ENCODE measurements at regions of chr2 and their contacts with region 1.

Region 1: GRCh38 chr2:197310271-197310985 is at the start of gene ANKRD44:
- DNase-seq: peak; percentile 87
- H3K4me3 Mint-ChIP-seq: peak within 1 kb of the TSS; percentile 89
- H3K27ac Mint-ChIP-seq: peak within 1 kb of the TSS; percentile 93
- H3K4me1 Mint-ChIP-seq: peaks cover 63% of the 10 kb centered on the region
- H3K27me3 Mint-ChIP-seq: no peaks in the 10 kb centered on the region
- total RNA-seq, gene ANKRD44: 107 and 120 TPM in 2 replicates

Region 2: DNA sequence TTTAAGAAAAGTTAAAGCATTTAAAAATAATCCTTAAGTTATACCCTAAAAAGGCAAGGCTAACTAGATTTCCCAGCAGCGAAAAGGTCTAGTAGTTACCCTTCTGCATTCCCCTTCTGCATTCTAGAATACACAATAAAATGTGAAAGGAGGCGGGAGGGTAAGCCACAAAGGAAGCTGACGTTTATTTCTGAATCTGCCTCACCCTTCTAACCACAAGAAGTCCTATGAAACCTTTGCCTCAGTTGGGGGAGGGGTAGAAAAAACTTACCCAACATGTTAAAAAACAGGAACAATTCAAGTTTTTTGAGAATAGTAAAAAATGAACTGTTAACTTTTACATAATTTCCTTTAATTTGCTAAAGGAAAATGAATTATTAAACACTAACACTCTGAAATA is 1150.3 kb before region 1 on chr2:
- intact Hi-C with region 1: loop called (anchors 10 kb)
- DNase-seq: peak; percentile 69
- H3K4me3 Mint-ChIP-seq: peak overlapping the region; percentile 55
- H3K27ac Mint-ChIP-seq: peak overlapping the region; percentile 87
- H3K4me1 Mint-ChIP-seq: peaks cover 60% of the 10 kb centered on the region
- H3K27me3 Mint-ChIP-seq: no peaks in the 10 kb centered on the region

Region 3: DNA sequence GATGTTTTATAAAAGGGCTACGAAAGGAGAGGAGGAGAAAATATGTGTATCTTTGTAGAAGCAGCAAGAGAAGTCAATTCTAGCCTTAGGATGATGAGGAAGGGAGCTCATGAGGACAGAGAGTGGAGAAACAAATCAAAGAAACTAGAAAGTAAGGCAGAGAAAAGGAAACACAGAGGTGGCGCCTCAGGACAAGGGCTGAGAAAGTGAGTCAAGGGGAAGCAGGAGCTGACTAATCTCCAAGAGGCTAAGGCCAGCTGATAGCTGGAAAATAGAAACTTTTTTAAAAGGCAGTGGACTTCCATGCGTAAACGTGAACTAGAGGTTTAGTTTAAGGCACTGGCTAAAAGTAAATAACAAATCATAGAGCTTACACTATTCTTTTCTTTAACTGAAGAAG is 173.2 kb before region 1 on chr2:
- intact Hi-C with region 1: loop called (anchors 5 kb)
- DNase-seq: no peak
- H3K4me3 Mint-ChIP-seq: peak overlapping the region; percentile 13
- H3K27ac Mint-ChIP-seq: peak overlapping the region; percentile 68
- H3K4me1 Mint-ChIP-seq: peaks cover 82% of the 10 kb centered on the region
- H3K27me3 Mint-ChIP-seq: no peaks in the 10 kb centered on the region

Region 4: GRCh38 chr2:197152451-197153228 is 157.8 kb before region 1 on chr2:
- intact Hi-C with region 1: no loop called
- DNase-seq: no peak
- H3K4me3 Mint-ChIP-seq: peak overlapping the region; percentile 6
- H3K27ac Mint-ChIP-seq: peak overlapping the region; percentile 59
- H3K4me1 Mint-ChIP-seq: peaks cover 58% of the 10 kb centered on the region
- H3K27me3 Mint-ChIP-seq: no peaks in the 10 kb centered on the region

Region 5: GRCh38 chr2:197198890-197199289 is 111.5 kb before region 1 on chr2:
- intact Hi-C with region 1: loop called (anchors 1 kb)
- DNase-seq: peak; percentile 89
- H3K4me3 Mint-ChIP-seq: peak overlapping the region; percentile 86
- H3K27ac Mint-ChIP-seq: peak overlapping the region; percentile 95
- H3K4me1 Mint-ChIP-seq: peaks cover 80% of the 10 kb centered on the region
- H3K27me3 Mint-ChIP-seq: no peaks in the 10 kb centered on the region

Region 6: DNA sequence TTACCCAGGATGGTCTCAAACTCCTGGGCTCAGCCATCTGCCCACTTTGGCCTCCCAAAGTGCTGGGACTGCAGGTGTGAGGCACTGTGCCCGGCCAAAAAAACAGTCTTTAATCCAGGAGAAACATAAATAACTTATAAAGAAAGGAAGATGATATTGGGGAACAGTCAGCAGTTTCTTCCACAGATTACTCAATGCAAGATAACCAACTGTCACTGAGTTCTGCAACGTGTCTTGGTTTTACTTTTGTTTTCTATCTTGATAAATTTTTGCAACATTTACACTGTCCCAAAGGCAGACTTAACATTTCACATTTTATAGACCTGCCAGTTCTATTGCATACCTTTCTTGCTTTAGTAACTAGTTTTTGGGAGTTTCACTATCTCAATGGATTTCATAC is 71.0 kb before region 1 on chr2:
- intact Hi-C with region 1: loop called (anchors 1 kb)
- DNase-seq: no peak
- H3K4me3 Mint-ChIP-seq: peak overlapping the region; percentile 77
- H3K27ac Mint-ChIP-seq: peak overlapping the region; percentile 94
- H3K4me1 Mint-ChIP-seq: peaks cover 73% of the 10 kb centered on the region
- H3K27me3 Mint-ChIP-seq: no peaks in the 10 kb centered on the region

Region 7: DNA sequence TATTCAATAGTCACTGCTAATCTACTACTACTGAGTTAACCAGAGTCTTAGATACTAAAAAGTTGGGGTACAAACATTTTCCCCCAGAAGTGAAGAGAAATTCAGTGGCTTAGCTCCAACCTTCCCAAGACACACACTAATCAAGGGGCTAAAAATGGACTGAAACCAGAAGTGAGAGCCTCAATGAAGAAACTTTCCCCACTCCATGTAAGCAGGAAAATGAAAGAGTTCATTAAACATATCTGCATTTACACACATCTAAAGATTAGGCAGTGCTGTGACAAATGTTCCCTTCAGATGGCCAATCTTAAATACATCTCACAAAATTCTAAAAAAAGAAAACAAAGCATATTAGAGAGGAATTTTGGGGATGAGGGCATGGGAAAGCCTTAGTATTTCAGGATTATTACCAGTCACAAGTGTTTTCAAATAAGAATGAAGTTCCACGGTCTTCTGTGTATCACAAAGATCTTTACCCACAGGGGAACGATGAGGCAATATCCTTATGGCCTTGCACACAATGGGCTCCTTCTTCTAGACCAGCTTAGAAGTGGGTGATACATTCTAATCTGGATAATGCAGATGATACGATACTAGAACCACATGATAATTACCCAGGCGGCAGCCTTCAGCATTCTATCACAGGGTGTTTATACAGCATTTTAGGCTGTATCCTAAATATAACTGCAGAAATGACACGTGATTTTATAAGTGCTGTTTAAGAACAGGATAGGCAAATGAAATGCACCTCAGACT is 17.0 kb before region 1 on chr2:
- intact Hi-C with region 1: loop called (anchors 1 kb)
- DNase-seq: no peak
- H3K4me3 Mint-ChIP-seq: peak overlapping the region; percentile 79
- H3K27ac Mint-ChIP-seq: peak overlapping the region; percentile 94
- H3K4me1 Mint-ChIP-seq: peaks cover 80% of the 10 kb centered on the region
- H3K27me3 Mint-ChIP-seq: no peaks in the 10 kb centered on the region

Region 8: DNA sequence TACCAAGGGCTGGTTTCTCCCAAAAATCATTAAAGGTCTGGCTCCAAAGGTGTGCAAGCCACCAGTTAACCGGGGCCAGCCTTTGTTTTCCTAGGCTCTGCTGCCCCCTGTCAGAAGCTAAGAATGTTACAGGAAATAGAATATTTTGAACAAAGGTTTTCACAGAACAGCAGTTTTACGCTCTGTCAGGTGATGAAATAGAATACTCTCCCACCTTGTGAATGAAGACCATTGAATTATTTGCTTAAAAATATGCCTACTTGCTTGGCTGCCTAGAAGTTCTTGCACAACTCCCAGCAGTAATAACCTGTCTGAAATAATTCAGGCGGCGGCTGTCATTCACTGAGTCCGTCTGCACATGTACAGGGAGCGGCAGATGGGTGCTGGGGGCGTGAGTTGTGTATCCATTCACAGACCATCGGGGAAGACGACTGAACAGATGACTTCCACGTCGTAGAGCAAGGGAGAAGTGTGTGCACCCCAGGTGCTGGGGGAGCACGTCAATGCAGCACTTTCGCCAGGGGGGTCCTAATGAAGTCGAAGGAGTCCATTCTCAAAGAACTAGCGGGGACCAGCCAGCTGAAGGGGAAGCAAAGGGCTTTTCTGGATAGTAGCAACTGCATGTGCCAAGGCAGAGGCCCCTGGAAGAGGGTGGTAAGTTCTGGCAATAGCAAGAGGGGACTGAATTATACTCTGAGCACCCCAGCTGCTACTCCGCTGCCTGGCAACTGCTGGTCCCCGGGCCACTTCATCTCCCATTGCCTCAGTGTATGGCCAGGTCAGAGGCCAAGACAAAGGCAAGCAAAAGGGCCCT is 68.3 kb after region 1 on chr2:
- intact Hi-C with region 1: loop called (anchors 2 kb)
- DNase-seq: peak; percentile 41
- H3K4me3 Mint-ChIP-seq: no peak overlapping the region
- H3K27ac Mint-ChIP-seq: peak overlapping the region; percentile 0
- H3K4me1 Mint-ChIP-seq: peaks cover 18% of the 10 kb centered on the region
- H3K27me3 Mint-ChIP-seq: peaks cover 3% of the 10 kb centered on the region